CD8-positive, alpha-beta T cell (primary cell): ENCODE measurements at regions of chrX and their contacts with region 1.

Region 1: DNA sequence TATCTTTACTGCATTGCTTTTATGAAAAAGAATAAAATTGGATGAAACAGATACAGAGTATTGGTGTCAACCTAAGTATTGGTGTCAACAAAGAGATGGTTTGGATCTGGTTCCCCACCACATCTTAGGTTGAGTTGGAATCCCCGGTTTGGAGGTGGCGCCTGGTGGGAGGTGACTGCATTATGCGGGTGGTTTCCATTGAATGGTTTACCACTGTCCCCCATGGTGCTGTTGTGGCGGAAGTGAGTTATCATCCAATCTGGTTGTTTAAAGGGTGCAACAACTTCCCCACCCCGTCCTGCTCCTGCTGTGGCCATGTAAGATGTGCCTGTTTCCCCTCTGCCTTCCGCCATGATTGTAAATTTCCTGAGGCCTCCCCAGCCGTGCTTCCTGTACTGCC is 52.8 kb upstream of the CD99 start:
- DNase-seq: peak in 3 of 9 experiments; percentile 10 to 72 (median 62)
- ATAC-seq: peak; percentile 87
- H3K4me3 ChIP-seq: no peak overlapping the region
- H3K4me3 Mint-ChIP-seq: no peak overlapping the region
- H3K27ac ChIP-seq: no peak overlapping the region
- H3K27ac Mint-ChIP-seq: peak overlapping the region; percentile 38
- H3K4me1 ChIP-seq: no peaks in the 10 kb centered on the region
- H3K4me1 Mint-ChIP-seq: peaks cover 19% of the 10 kb centered on the region
- H3K27me3 ChIP-seq: no peaks in the 10 kb centered on the region
- H3K27me3 Mint-ChIP-seq: no peaks in the 10 kb centered on the region
- CTCF ChIP-seq: no peak

Region 2: DNA sequence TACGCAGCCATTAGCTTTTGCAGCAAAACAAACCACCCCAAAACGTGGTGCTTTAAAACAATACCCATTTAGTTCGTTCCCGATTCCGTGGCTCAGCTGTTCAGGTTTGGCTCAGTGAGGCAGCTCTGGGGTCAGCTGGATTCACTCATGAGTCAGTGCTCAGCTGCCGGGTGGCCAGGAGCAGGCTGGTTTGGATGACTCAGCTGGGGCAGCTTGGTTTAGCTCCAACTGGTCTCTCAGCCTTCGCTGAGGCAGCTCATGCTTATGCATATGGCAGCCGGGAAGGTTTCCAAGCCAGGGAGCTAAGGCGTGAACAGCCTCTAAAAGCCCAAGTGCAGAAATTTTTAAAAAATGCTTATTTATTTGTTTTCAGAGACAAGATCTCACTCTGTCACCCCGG is 39.5 kb after region 1 on chrX:
- CTCF ChIA-PET with region 1: no interaction called
- POLR2A ChIA-PET with region 1: no interaction called
- intact Hi-C with region 1: loop called in 1 of 2 experiments (anchors 2 kb)
- DNase-seq: no peak
- ATAC-seq: no peak
- H3K4me3 ChIP-seq: no peak overlapping the region
- H3K4me3 Mint-ChIP-seq: no peak overlapping the region
- H3K27ac ChIP-seq: no peak overlapping the region
- H3K27ac Mint-ChIP-seq: no peak overlapping the region
- H3K4me1 ChIP-seq: no peaks in the 10 kb centered on the region
- H3K4me1 Mint-ChIP-seq: no peaks in the 10 kb centered on the region
- H3K27me3 ChIP-seq: no peaks in the 10 kb centered on the region
- H3K27me3 Mint-ChIP-seq: no peaks in the 10 kb centered on the region
- CTCF ChIP-seq: no peak

Region 3: GRCh38 chrX:2707334-2707760 is 69.1 kb after region 1 on chrX:
- CTCF ChIA-PET with region 1: no interaction called
- POLR2A ChIA-PET with region 1: no interaction called
- intact Hi-C with region 1: loop called in 1 of 2 experiments (anchors 5 kb)
- DNase-seq: peak; percentile 13 to 80 (median 64)
- ATAC-seq: peak; percentile 50
- H3K4me3 ChIP-seq: peak overlapping the region in 1 of 2 experiments; percentile 16
- H3K4me3 Mint-ChIP-seq: peak overlapping the region; percentile 52
- H3K27ac ChIP-seq: peak overlapping the region in 1 of 2 experiments; percentile 31
- H3K27ac Mint-ChIP-seq: peak overlapping the region; percentile 84
- H3K4me1 ChIP-seq: peaks cover 76% of the 10 kb centered on the region
- H3K4me1 Mint-ChIP-seq: peaks cover 86% of the 10 kb centered on the region
- H3K27me3 ChIP-seq: no peaks in the 10 kb centered on the region
- H3K27me3 Mint-ChIP-seq: no peaks in the 10 kb centered on the region
- CTCF ChIP-seq: no peak